ENCODE measurements at regions of chr9 and their contacts with region 1.

Region 1: GRCh38 chr9:21334701-21335632 is at the start of gene KLHL9:
- DNase-seq: peak; percentile 86 to 99 (median 92)

Region 2: GRCh38 chr9:21802195-21803000 is 467.4 kb after region 1 on chr9 and contains the start of gene MTAP:
- intact Hi-C with region 1: loop called (anchors 5 kb)
- DNase-seq: peak; percentile 84 to 99 (median 93)